Cardiac septum (tissue), 1 donor: ENCODE measurements at regions of chr6 and their contacts with region 1.

Region 1: DNA sequence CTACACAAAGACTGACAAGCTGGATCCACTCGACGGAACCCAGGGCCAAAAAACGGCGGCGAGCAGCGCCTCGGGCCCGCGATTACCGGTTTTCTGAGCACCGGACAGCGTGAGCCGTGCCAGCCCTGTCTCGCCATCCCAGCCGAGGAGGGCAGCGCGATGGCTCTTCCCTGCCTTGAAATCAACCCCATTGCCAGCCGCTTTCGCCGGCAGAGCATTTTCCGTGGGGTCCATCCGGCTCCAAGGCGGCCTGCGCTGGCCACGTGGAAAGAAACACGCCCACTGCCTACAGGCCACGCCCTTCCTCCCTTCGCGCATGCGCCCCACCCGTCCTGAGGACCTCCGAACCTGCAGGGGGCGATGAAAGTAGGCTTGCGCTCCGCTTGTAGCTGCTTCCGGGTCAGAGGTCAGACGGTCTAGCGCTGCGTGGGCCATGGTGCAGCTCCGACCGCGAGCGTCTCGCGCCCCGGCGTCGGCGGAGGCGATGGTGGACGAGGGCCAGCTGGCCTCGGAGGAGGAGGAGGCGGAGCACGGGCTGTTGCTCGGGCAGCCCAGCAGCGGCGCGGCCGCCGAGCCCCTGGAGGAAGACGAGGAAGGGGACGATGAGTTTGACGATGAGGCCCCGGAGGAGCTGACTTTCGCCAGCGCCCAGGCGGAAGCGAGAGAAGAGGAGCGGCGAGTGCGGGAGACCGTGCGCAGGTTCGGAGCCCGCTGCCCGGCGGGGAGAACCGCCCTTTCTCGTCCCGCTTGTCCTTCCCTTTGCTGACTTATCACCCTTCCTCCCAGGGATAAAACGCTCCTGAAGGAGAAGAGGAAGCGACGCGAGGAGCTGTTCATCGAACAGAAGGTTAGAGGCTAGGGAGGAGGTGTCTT is at the start of gene NOL7:
- DNase-seq: peak; percentile 99
- total RNA-seq, gene NOL7: 50.5 TPM

Region 2: DNA sequence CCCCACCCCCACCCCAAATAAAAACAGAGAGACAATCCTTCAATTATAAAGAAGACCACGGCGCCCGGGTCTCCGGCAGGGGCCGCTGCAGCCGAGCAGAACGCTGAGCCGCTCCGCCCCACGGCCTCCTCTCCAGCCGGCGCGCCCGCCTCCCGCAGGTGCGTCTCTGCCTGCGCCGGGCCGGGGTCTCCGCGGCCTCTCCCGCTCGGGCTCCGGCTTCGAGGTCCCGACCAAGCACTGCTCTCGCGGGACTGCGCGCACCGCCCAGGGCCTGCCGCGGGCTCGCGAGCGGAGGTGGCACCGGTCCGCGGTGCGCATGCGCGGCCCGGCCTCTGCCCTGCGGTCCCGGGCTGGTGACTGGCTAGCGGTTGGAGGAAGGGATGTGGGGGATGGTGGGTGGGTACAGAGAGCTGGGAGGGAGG is 41.0 kb before region 1 on chr6:
- intact Hi-C with region 1: loop called (anchors 5 kb)
- DNase-seq: peak; percentile 95

Region 3: GRCh38 chr6:13711733-13712598 is 96.8 kb after region 1 on chr6 and contains the start of gene RANBP9:
- intact Hi-C with region 1: loop called (anchors 2 kb)
- DNase-seq: peak; percentile 92
- total RNA-seq, gene RANBP9: 40.2 TPM

Region 4: GRCh38 chr6:13762611-13763441 is 147.7 kb after region 1 on chr6:
- intact Hi-C with region 1: loop called (anchors 5 kb)
- DNase-seq: peak; percentile 71

Region 5: GRCh38 chr6:14066782-14067406 is 451.7 kb after region 1 on chr6:
- intact Hi-C with region 1: no loop called
- DNase-seq: no peak